ENCODE measurements at regions of chr10 and their contacts with region 1.

Region 1: GRCh38 chr10:104406715-104407650 is 53.4 kb downstream of the CFAP58 start:
- DNase-seq: no peak
- H3K4me3 ChIP-seq: no peak overlapping the region
- H3K27ac ChIP-seq: no peak overlapping the region
- H3K4me1 ChIP-seq: no peaks in the 10 kb centered on the region
- H3K27me3 ChIP-seq: peaks cover 4% of the 10 kb centered on the region
- CTCF ChIP-seq: peak in 2 of 3 experiments; percentile 55 to 84

Region 2: GRCh38 chr10:103470761-103471653 is 936.0 kb before region 1 on chr10:
- dilution Hi-C with region 1: no loop called
- DNase-seq: no peak
- H3K4me3 ChIP-seq: no peak overlapping the region
- H3K27ac ChIP-seq: no peak overlapping the region
- H3K4me1 ChIP-seq: peaks cover 3% of the 10 kb centered on the region
- H3K27me3 ChIP-seq: peaks cover 4% of the 10 kb centered on the region
- CTCF ChIP-seq: no peak

Region 3: DNA sequence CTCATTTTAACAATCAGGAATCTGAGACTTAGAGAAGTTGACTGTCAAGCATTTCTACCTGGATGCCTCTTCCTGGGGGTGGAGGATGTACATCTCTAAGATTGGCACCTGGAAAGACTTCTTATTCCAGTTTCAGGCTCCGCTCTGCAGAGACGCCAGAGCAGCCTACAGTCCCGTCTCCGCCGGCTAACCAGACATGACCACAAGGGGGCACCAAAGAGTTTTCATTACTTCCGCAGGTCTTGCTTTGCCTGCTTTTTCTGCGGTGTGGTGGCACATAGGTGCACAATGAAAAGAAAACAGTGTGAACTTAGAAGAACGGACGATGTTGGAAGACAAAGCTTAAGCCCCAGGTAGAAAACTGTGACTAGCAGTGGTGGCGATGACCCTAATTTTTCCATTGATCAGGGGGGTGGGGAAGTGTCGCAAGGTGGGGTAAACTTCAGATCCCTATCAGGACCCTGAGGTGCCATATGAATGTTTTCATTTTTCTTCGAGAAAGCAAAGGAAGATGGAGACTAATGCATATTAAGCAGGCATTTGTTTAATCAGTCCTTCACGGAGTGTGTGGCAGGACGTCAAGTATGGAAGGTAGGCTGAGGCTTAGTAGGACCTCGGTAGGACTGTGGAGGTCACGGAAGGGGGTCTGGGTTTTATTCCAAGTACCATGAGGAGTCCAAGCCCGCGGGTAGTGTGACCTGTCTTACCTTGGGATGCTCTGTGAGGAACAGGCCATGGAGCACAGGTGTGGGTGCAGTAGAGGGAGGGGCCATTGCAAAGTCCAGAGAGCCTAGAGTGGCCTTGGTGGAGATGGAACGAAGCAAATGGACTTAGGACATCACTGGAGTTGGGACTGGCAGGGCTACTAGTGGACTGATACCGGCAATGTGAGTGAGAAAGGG is 174.0 kb after region 1 on chr10:
- dilution Hi-C with region 1: loop called (anchors 25 kb)
- DNase-seq: peak; percentile 23
- H3K4me3 ChIP-seq: no peak overlapping the region
- H3K27ac ChIP-seq: no peak overlapping the region
- H3K4me1 ChIP-seq: peaks cover 18% of the 10 kb centered on the region
- H3K27me3 ChIP-seq: no peaks in the 10 kb centered on the region
- CTCF ChIP-seq: peak; percentile 82 to 92 (median 87)

Measured in keratinocyte (primary cell).